ENCODE measurements at regions of chr2 and their contacts with region 1.

Region 1: GRCh38 chr2:159712143-159712928 is at the start of gene MARCHF7:
- DNase-seq: peak; percentile 97 to 99 (median 97)
- ATAC-seq: peak; percentile 98
- H3K4me3 ChIP-seq: peak within 1 kb of the TSS; percentile 97
- H3K4me1 ChIP-seq: peaks cover 16% of the 10 kb centered on the region
- CTCF ChIP-seq: peak; percentile 59
- total RNA-seq, gene MARCHF7: 59.0 to 75.6 (median 65.6) TPM

Region 2: GRCh38 chr2:159615140-159615951 is 97.0 kb before region 1 on chr2:
- intact Hi-C with region 1: loop called in 1 of 2 experiments (anchors 10 kb)
- DNase-seq: peak; percentile 90 to 93 (median 91)
- ATAC-seq: peak; percentile 91
- H3K4me3 ChIP-seq: peak overlapping the region; percentile 54
- H3K4me1 ChIP-seq: peaks cover 24% of the 10 kb centered on the region
- CTCF ChIP-seq: no peak

Region 3: DNA sequence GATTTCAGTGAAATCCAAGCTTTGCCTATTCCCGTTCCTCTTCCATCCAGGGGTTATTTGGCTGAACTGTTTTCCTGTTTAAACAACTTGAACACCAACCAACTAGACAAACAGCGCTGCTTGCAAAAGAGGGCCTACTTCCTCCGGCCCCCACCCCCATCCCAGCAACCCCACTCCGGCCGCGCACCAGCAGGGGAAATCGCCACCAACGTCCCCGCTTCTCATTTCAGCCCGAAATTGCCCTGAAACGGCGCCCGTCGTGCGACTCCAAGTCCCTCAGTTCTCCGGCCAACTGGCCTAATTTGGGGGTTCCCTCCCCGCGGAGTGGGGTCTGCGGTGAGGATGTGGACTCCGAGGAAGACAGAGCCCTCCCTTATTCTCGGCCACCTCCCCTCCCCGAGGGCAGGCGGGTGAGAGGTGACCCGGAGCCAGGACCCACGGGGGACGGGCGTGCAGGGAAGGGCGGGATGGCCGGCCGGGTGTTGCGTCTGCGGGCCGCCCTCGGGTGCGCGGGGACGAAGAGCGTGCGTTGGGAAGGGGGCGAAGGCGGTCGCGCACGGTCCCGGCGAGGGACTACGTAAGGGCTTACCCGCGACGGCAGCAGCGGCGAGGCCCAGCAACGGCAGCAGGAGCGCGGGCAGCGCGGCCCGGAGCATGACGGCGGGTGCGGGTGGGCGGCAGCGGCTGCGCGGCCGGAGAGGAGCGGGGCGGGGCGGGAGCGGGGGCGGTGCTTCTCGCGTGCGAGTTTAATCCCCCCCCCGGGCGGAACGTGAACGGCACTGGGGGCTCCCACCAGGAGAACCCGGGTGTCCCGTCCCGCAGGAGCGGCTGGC is 85.4 kb after region 1 on chr2 and contains the start of gene CD302:
- intact Hi-C with region 1: loop called in 1 of 2 experiments (anchors 10 kb)
- DNase-seq: peak; percentile 78 to 80 (median 78)
- ATAC-seq: peak; percentile 83
- H3K4me3 ChIP-seq: peak within 1 kb of the TSS; percentile 37
- H3K4me1 ChIP-seq: peaks cover 9% of the 10 kb centered on the region
- CTCF ChIP-seq: no peak
- total RNA-seq, gene CD302: 9.4 to 27.1 (median 16.0) TPM

Measured in mucosa of descending colon (tissue), 3 donors.